GM13976 (cell line): ENCODE measurements at regions of chr1 and their contacts with region 1.

Region 1: GRCh38 chr1:13662493-13662892 is 37.5 kb upstream of the PRDM2 start:
- DNase-seq: no peak
- CTCF ChIP-seq: no peak

Region 2: DNA sequence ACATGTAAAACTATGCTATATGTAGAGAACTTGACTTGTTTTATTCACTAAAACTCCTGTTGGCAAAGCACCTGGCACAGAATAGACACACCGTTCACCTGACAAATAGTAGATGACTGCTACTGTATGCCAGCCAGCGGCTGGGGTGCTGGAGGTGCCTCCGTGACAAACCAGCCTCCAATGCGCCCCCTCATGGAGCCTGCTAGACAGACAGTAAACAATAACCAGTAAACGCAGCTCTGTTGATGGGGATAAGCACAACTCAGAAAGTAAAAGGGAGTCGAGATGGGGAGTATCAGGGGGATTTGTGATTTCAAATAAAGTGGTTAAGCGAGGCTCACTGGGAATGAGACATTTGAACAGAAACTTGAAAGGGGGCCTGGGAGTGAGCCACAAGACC is 144.7 kb after region 1 on chr1:
- in situ Hi-C with region 1: loop called (anchors 10 kb)
- DNase-seq: peak; percentile 63
- CTCF ChIP-seq: peak; percentile 27

Region 3: DNA sequence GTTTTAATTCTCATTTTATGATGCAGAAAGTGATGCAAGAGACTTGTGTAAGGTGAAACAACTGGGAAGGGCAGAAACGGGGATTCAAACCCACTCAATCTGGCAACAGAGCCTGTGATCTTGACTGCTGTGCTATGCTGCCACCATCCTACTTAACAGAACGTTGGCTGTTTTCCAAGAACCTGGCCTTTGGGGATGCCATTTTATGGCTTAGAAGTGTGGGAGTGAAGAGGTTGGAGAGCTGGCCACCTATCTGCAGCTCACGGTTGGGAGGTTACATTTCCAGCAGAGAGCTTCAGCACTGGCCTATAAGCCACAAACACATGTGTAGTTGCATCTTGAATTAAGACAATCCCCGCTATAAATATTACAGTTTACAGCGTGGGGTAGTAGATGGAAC is 272.8 kb after region 1 on chr1:
- in situ Hi-C with region 1: no loop called
- DNase-seq: no peak
- CTCF ChIP-seq: no peak

Region 4: DNA sequence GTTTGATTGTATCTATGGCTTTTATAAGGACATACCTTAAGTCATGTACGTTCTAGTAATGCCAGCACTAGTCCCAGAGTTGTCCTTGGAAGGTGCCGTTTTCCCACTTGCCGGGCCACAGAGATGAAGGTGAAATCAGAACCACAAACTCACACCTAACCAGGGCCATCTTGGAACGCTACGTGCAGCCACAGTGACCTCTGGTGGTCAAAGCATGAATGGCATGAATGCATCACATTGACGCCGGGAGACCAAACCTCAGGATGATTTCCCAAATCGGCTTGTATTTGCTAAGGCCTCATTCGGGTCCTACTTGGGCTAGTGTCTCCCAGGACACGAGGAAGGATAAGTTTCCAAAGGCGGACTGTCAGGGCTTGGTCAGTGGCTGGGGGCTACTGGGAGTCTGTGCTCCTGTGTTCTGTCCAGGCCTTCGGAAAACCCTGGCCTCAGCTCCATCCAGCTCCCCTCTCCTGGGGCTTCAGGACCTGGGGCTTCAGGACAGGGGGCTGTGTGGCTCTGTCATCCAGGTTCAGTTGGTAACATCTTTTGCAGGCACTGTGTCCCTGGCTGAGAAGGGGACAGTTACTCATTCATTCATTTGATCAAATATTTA is 298.0 kb after region 1 on chr1:
- in situ Hi-C with region 1: loop called (anchors 25 kb)
- DNase-seq: peak; percentile 74
- CTCF ChIP-seq: peak; percentile 88